CD4-positive, alpha-beta T cell (primary cell): ENCODE measurements at regions of chr2 and their contacts with region 1.

Region 1: GRCh38 chr2:197434541-197435513 is at the start of gene SF3B1:
- DNase-seq: peak; percentile 97 to 100 (median 99)
- ATAC-seq: peak; percentile 95
- H3K4me3 ChIP-seq: peak within 1 kb of the TSS; percentile 78
- H3K4me3 Mint-ChIP-seq: peak within 1 kb of the TSS; percentile 98
- H3K27ac ChIP-seq: peak within 1 kb of the TSS; percentile 97 to 99
- H3K27ac Mint-ChIP-seq: peak within 1 kb of the TSS; percentile 99
- H3K4me1 ChIP-seq: peaks cover 37% of the 10 kb centered on the region
- H3K4me1 Mint-ChIP-seq: peaks cover 61% of the 10 kb centered on the region
- H3K27me3 ChIP-seq: no peaks in the 10 kb centered on the region
- H3K27me3 Mint-ChIP-seq: no peaks in the 10 kb centered on the region
- CTCF ChIP-seq: no peak
- total RNA-seq, gene SF3B1: 498 to 529 TPM

Region 2: GRCh38 chr2:196853301-196854087 is 581.3 kb before region 1 on chr2:
- CTCF ChIA-PET with region 1: no interaction called
- POLR2A ChIA-PET with region 1: no interaction called
- intact Hi-C with region 1: no loop called
- DNase-seq: no peak
- ATAC-seq: no peak
- H3K4me3 ChIP-seq: no peak overlapping the region
- H3K4me3 Mint-ChIP-seq: no peak overlapping the region
- H3K27ac ChIP-seq: no peak overlapping the region
- H3K27ac Mint-ChIP-seq: no peak overlapping the region
- H3K4me1 ChIP-seq: no peaks in the 10 kb centered on the region
- H3K4me1 Mint-ChIP-seq: no peaks in the 10 kb centered on the region
- H3K27me3 ChIP-seq: no peaks in the 10 kb centered on the region
- H3K27me3 Mint-ChIP-seq: no peaks in the 10 kb centered on the region
- CTCF ChIP-seq: no peak

Region 3: GRCh38 chr2:197356136-197356535 is 78.7 kb before region 1 on chr2:
- CTCF ChIA-PET with region 1: no interaction called
- POLR2A ChIA-PET with region 1: no interaction called
- intact Hi-C with region 1: no loop called
- DNase-seq: peak in 3 of 14 experiments; percentile 25 to 54 (median 47)
- ATAC-seq: peak; percentile 78
- H3K4me3 ChIP-seq: no peak overlapping the region
- H3K4me3 Mint-ChIP-seq: no peak overlapping the region
- H3K27ac ChIP-seq: no peak overlapping the region
- H3K27ac Mint-ChIP-seq: no peak overlapping the region
- H3K4me1 ChIP-seq: no peaks in the 10 kb centered on the region
- H3K4me1 Mint-ChIP-seq: peaks cover 27% of the 10 kb centered on the region
- H3K27me3 ChIP-seq: no peaks in the 10 kb centered on the region
- H3K27me3 Mint-ChIP-seq: no peaks in the 10 kb centered on the region
- CTCF ChIP-seq: peak; percentile 56

Region 4: DNA sequence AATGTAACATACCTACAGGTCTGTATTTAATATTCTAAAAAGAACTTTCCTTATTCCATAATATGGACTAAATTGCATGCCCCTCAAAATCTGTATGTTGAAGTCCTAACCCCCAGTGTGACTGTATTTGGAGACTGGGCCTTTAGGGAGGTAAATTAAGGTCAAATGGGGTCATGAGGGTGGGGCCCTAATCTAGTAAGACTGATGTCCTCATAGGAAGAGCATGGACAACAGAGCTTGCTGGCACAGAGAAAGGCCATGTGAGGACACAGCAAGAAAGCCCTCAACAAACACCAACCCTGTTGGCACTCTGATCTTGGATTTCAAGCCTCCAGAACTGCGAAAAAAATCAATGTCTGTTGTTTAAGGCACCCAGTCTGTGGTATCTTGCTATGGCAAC is 18.6 kb before region 1 on chr2:
- CTCF ChIA-PET with region 1: interaction called, 3 read pairs
- POLR2A ChIA-PET with region 1: interaction called, 4 read pairs
- intact Hi-C with region 1: loop called in 1 of 2 experiments (anchors 2 kb)
- DNase-seq: no peak
- ATAC-seq: no peak
- H3K4me3 ChIP-seq: no peak overlapping the region
- H3K4me3 Mint-ChIP-seq: no peak overlapping the region
- H3K27ac ChIP-seq: no peak overlapping the region
- H3K27ac Mint-ChIP-seq: no peak overlapping the region
- H3K4me1 ChIP-seq: no peaks in the 10 kb centered on the region
- H3K4me1 Mint-ChIP-seq: peaks cover 17% of the 10 kb centered on the region
- H3K27me3 ChIP-seq: no peaks in the 10 kb centered on the region
- H3K27me3 Mint-ChIP-seq: no peaks in the 10 kb centered on the region
- CTCF ChIP-seq: no peak

Region 5: DNA sequence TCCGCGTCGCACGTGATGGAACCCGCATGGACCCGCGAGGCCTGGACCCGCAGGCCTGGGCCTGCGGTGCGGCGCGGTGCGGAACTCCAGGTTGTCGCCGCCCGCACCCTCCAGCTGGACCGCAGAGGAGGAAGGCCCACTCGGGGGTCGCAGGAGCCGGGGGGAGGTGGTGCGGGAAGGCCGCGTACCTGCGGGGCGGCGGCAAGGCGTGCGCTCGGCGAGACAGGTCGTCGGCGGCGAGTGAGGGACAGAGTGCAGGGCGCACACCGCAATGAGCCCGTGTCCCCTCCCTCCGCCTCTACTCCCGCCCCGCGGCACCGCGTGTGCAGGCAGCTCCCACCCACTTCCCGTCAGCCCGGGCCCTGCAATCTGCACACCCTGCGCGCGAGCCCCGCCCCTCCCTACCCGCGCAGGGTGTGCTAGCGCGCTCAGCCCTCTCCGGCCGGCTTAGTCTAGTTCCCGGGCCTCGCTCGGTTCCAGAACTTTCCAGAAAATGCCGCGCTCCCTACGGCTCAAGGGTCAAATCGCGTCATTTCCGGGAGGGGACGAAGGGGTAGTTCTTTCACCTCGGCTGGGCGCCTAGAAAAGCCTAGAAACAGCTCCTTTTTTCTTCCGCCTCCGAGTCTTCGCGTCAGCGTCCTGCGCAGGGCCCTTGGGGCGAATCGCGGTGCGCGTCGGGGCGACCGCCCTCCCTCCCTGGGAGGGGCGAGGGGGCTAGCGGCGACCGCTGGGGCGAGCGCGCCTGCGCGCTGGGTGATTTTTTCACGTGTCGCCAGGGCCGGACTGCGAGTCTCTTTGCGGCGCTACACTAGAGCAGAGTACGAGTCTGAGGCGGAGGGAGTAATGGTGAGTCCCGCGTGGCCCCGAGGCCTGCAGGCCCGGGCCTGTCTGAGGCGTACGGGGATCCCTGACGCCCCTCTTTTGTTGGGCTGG is 65.0 kb after region 1 on chr2 and contains the starts of genes HSPD1 and HSPE1:
- CTCF ChIA-PET with region 1: interaction called, 4 read pairs
- POLR2A ChIA-PET with region 1: interaction called, 106 read pairs
- intact Hi-C with region 1: loop called (anchors 1 to 2 kb)
- DNase-seq: peak; percentile 91 to 99 (median 95)
- ATAC-seq: peak; percentile 85
- H3K4me3 ChIP-seq: peak within 1 kb of the TSS; percentile 95
- H3K4me3 Mint-ChIP-seq: peak within 1 kb of the TSS; percentile 94
- H3K27ac ChIP-seq: peak within 1 kb of the TSS; percentile 93 to 97
- H3K27ac Mint-ChIP-seq: peak within 1 kb of the TSS; percentile 87
- H3K4me1 ChIP-seq: peaks cover 41% of the 10 kb centered on the region
- H3K4me1 Mint-ChIP-seq: peaks cover 69% of the 10 kb centered on the region
- H3K27me3 ChIP-seq: no peaks in the 10 kb centered on the region
- H3K27me3 Mint-ChIP-seq: no peaks in the 10 kb centered on the region
- CTCF ChIP-seq: no peak
- total RNA-seq, gene HSPD1: 154 to 157 TPM
- total RNA-seq, gene HSPE1: 50.8 to 56.2 TPM

Region 6: DNA sequence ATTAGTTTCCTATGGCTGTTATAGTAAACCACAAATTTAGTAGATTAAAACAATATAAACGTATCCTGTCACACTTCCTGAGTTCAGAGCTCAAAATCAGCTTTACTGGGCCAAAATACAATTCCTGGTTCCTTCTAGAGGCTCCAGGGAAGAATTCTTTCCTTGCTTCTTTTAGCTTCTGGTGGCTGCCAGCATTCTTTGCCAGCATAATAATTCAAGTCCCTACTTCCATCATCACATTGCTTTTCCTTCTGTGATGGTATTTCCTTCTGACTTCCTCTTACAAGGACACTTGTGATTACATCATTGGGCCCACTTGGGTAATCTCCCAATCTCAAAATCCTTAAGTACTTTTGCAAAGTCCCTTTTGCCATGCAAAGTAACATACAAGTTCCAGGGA is 121.6 kb after region 1 on chr2:
- CTCF ChIA-PET with region 1: no interaction called
- POLR2A ChIA-PET with region 1: no interaction called
- intact Hi-C with region 1: no loop called
- DNase-seq: peak in 1 of 14 experiments; percentile 5
- ATAC-seq: no peak
- H3K4me3 ChIP-seq: no peak overlapping the region
- H3K4me3 Mint-ChIP-seq: no peak overlapping the region
- H3K27ac ChIP-seq: no peak overlapping the region
- H3K27ac Mint-ChIP-seq: peak overlapping the region; percentile 34
- H3K4me1 ChIP-seq: no peaks in the 10 kb centered on the region
- H3K4me1 Mint-ChIP-seq: peaks cover 8% of the 10 kb centered on the region
- H3K27me3 ChIP-seq: no peaks in the 10 kb centered on the region
- H3K27me3 Mint-ChIP-seq: no peaks in the 10 kb centered on the region
- CTCF ChIP-seq: no peak

Region 7: DNA sequence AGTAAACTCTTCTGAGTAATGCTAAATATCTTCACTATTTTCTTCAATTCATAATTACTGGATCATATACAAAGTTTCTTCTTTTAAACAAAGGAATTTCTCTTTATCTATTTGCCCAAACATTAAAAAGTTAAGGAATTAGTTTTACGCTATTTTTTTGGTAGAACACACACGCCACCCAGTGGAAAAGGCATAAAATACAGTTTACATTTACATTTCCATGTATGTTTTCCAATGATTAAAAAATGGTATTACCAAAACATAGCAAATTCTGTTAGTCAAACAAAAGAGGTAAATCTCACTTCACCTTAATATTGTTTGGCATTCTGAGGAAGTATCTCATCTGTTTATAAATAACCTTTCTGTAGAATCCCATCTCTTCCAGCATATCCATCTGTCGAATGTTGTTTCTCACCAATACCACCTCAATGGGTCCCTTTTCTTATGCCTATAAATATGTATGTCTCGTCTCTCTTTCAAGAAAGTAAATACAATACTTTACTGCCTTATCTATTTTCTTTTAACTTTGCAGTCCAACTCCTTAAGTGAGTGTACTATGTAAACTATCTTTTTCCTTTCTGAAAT is 343.1 kb after region 1 on chr2:
- CTCF ChIA-PET with region 1: no interaction called
- POLR2A ChIA-PET with region 1: no interaction called
- intact Hi-C with region 1: loop called (anchors 5 to 10 kb)
- DNase-seq: peak in 4 of 14 experiments; percentile 46 to 58 (median 50)
- ATAC-seq: no peak
- H3K4me3 ChIP-seq: no peak overlapping the region
- H3K4me3 Mint-ChIP-seq: no peak overlapping the region
- H3K27ac ChIP-seq: no peak overlapping the region
- H3K27ac Mint-ChIP-seq: no peak overlapping the region
- H3K4me1 ChIP-seq: no peaks in the 10 kb centered on the region
- H3K4me1 Mint-ChIP-seq: no peaks in the 10 kb centered on the region
- H3K27me3 ChIP-seq: no peaks in the 10 kb centered on the region
- H3K27me3 Mint-ChIP-seq: peaks cover 18% of the 10 kb centered on the region
- CTCF ChIP-seq: peak; percentile 89